Esophagus squamous epithelium (tissue), 5 donors: ENCODE measurements at regions of chr2 and their contacts with region 1.

Region 1: GRCh38 chr2:174603280-174603679 is 5.7 kb upstream of the WIPF1 start:
- DNase-seq: no peak
- H3K4me3 ChIP-seq: no peak overlapping the region
- H3K27ac ChIP-seq: peak overlapping the region in 1 of 4 donors; percentile 4
- H3K4me1 ChIP-seq: peaks cover 7 to 55% (median 24%) of the 10 kb centered on the region in 3 donors
- H3K27me3 ChIP-seq: no peaks in the 10 kb centered on the region
- CTCF ChIP-seq: peak in 5 of 6 experiments; percentile 41 to 60 (median 51)
- POLR2A ChIP-seq: no peak

Region 2: DNA sequence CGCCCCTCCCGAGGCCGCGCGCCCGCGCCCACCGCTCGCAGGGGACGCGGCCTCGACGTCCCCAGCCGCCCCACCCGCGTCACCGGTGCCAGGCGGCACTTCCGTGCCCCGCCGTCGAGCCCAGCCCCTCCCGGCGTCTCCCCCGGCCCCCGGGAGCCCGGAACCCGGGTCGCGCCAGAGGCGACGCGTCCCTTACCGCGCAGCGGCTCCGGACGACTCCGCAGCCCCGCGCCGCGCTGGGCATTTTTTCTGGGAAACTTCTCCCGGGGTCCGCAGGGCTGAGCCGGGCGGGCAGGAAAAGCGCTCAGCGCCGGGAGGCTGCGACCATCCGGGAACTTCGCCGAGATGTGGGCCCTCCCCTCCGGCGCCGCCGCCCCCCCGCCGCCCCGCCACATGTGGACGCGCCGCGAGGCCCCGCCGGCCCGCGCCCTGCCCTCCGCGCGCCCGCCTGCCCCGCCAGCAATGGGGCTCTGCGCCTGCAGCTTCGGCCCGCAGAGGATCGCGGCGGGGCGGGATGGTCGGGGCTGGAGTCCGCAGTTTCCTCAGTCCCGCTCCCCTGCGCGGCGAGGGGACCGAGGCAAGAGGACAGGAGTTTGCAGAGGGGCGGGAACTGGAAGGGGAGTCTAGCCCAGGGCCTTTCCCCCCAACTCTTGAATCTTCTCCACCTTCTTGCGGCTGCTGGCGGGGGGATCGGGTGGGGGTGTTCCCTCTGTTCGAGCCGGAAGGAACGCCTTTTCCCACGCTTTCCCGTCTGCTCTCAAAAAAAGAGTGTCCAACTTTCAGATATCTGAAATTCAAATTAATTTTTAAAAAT is 79.5 kb after region 1 on chr2:
- intact Hi-C with region 1: loop called (anchors 10 kb)
- DNase-seq: no peak
- H3K4me3 ChIP-seq: peak overlapping the region; percentile 60 to 96 (median 81)
- H3K27ac ChIP-seq: peak overlapping the region; percentile 75 to 92 (median 84)
- H3K4me1 ChIP-seq: peaks cover 7 to 38% (median 17%) of the 10 kb centered on the region in 3 donors
- H3K27me3 ChIP-seq: peaks cover 0 to 25% (median 0%) of the 10 kb centered on the region in 4 donors
- CTCF ChIP-seq: no peak
- POLR2A ChIP-seq: peak in 1 of 4 donors; percentile 13